ENCODE measurements at regions of chr12 and their contacts with region 1.

Region 1: GRCh38 chr12:71216725-71217579 is 59.2 kb upstream of the TSPAN8 start:
- DNase-seq: no peak
- H3K4me3 ChIP-seq: no peak overlapping the region
- H3K27ac ChIP-seq: no peak overlapping the region
- H3K4me1 ChIP-seq: peaks cover 0 to 10% (median 0%) of the 10 kb centered on the region in 3 donors
- H3K27me3 ChIP-seq: no peaks in the 10 kb centered on the region
- CTCF ChIP-seq: peak in 5 of 6 experiments; percentile 33 to 67 (median 45)
- POLR2A ChIP-seq: no peak

Region 2: DNA sequence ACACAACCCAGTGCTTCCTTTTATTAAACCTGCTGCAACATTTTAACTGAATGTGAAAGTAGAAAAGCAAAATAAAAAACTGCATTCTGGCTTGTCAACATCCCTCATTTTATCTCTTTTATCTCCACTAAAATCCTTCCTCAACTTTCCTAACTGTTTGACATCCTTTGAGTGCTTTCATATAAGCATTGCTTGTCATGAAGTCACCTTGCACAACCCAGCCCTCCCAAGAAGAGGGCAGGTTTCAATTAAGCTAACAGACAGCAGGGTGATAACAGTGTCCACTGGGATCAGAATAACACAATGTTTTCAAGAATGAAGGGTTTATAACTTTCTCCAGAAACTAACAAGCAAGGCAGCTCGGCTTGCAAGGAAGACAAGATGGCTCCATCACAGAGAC is 42.8 kb before region 1 on chr12:
- intact Hi-C with region 1: no loop called
- DNase-seq: no peak
- H3K4me3 ChIP-seq: no peak overlapping the region
- H3K27ac ChIP-seq: no peak overlapping the region
- H3K4me1 ChIP-seq: no peaks in the 10 kb centered on the region
- H3K27me3 ChIP-seq: no peaks in the 10 kb centered on the region
- CTCF ChIP-seq: no peak
- POLR2A ChIP-seq: no peak

Region 3: DNA sequence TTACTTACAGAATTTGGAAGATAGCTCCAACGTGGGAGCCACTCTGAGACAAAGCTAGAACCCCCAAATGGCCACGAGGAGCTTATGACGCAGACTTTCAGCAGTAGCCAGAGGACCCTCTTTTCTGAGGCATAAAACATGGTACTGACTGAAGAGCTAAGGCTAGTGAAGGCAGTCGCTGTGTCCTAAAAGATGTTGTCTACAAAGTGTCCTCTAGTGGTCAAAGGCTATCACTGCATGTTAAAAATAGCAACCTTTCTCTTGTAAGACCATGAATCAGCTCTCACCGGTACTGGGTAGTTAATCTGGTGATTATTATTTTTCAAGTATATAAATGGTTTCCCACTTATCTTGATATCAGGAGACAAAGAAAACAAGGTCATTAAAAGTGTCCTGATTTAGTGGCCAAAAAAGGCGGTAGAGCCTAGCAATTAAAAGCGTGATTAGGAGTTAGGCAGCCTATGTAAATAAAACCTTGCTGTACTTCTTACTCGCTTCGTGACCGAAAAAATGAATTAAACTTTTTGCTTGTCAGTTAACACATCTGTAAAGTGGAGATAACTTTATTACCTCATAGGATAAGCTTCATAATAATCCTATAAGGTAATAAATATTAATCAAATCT is 175.7 kb after region 1 on chr12:
- intact Hi-C with region 1: loop called (anchors 5 kb)
- DNase-seq: no peak
- H3K4me3 ChIP-seq: no peak overlapping the region
- H3K27ac ChIP-seq: no peak overlapping the region
- H3K4me1 ChIP-seq: no peaks in the 10 kb centered on the region
- H3K27me3 ChIP-seq: no peaks in the 10 kb centered on the region
- CTCF ChIP-seq: peak; percentile 31 to 80 (median 74)
- POLR2A ChIP-seq: no peak

Measured in esophagus squamous epithelium (tissue), 5 donors.